MCF 10A (cell line): ENCODE measurements at regions of chr2 and their contacts with region 1.

Region 1: GRCh38 chr2:162221064-162221463 is 22.2 kb downstream of the FAP start:
- DNase-seq: peak; percentile 82
- H3K4me3 Mint-ChIP-seq: no peak overlapping the region
- H3K27ac Mint-ChIP-seq: no peak overlapping the region
- H3K4me1 Mint-ChIP-seq: peaks cover 9% of the 10 kb centered on the region
- H3K27me3 Mint-ChIP-seq: no peaks in the 10 kb centered on the region
- CTCF ChIP-seq: peak; percentile 97

Region 2: GRCh38 chr2:161412346-161412745 is 808.7 kb before region 1 on chr2:
- CTCF ChIA-PET with region 1: no interaction called
- POLR2A ChIA-PET with region 1: no interaction called
- intact Hi-C with region 1: no loop called
- DNase-seq: no peak
- H3K4me3 Mint-ChIP-seq: no peak overlapping the region
- H3K27ac Mint-ChIP-seq: no peak overlapping the region
- H3K4me1 Mint-ChIP-seq: peaks cover 14% of the 10 kb centered on the region
- H3K27me3 Mint-ChIP-seq: peaks cover 24% of the 10 kb centered on the region
- CTCF ChIP-seq: no peak

Region 3: DNA sequence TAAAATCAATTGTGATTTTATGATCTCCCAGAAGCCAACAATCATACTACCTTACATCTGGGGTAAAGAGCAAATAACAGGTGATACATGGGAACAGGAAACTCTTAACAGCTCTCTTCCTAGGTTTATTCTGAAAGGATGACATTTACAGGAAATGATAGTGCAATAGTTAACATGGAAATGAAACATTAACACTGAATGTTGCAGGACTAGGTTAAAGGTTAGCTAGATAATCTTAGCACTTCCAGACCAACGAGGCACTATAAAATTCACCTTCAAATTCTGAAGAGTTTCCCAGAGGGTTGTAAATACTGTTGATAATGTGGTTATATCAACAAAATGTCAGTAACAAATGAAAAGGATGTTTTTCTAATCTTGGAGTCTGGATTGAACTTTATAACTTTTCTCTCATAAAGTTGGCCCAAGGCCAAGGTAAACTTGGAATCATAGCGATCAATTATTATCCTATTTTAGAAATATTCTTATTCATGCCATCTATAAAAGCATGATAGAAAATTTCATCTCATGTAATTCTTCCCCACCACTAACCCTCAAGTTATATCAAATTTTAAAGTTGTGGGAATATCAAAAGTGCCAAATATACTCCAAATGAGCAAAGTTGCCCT is 36.1 kb before region 1 on chr2:
- CTCF ChIA-PET with region 1: interaction called, 10 read pairs
- POLR2A ChIA-PET with region 1: no interaction called
- intact Hi-C with region 1: no loop called
- DNase-seq: no peak
- H3K4me3 Mint-ChIP-seq: no peak overlapping the region
- H3K27ac Mint-ChIP-seq: no peak overlapping the region
- H3K4me1 Mint-ChIP-seq: no peaks in the 10 kb centered on the region
- H3K27me3 Mint-ChIP-seq: no peaks in the 10 kb centered on the region
- CTCF ChIP-seq: no peak

Region 4: GRCh38 chr2:162244541-162245031 is 23.5 kb after region 1 on chr2:
- CTCF ChIA-PET with region 1: interaction called, 56 read pairs
- POLR2A ChIA-PET with region 1: interaction called, 11 read pairs
- intact Hi-C with region 1: loop called (anchors 1 kb)
- DNase-seq: peak; percentile 93
- H3K4me3 Mint-ChIP-seq: peak overlapping the region; percentile 60
- H3K27ac Mint-ChIP-seq: peak overlapping the region; percentile 92
- H3K4me1 Mint-ChIP-seq: peaks cover 47% of the 10 kb centered on the region
- H3K27me3 Mint-ChIP-seq: no peaks in the 10 kb centered on the region
- CTCF ChIP-seq: no peak

Region 5: DNA sequence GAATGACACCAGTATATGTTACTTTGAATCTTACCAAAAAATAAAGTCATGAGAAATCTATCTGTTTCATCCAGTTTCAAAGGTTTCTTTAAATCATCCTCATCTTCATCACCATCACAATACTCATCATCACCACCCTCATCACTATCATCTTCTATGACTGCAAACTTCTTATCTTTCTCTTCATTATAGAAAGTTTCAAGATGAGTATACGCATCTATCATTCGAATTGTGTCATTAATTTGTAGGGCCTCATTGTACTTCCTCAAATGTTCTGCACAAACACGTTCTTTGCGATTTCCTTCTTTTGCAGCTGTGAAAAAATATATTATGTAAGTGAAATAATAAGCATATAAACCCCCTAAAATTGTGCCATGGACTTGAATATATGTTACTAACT is 56.3 kb after region 1 on chr2:
- CTCF ChIA-PET with region 1: interaction called, 16 read pairs
- POLR2A ChIA-PET with region 1: no interaction called
- intact Hi-C with region 1: no loop called
- DNase-seq: no peak
- H3K4me3 Mint-ChIP-seq: no peak overlapping the region
- H3K27ac Mint-ChIP-seq: no peak overlapping the region
- H3K4me1 Mint-ChIP-seq: no peaks in the 10 kb centered on the region
- H3K27me3 Mint-ChIP-seq: no peaks in the 10 kb centered on the region
- CTCF ChIP-seq: no peak

Region 6: GRCh38 chr2:162301151-162301804 is 80.2 kb after region 1 on chr2:
- CTCF ChIA-PET with region 1: interaction called, 639 read pairs
- POLR2A ChIA-PET with region 1: interaction called, 21 read pairs
- intact Hi-C with region 1: loop called (anchors 1 kb)
- DNase-seq: peak; percentile 76
- H3K4me3 Mint-ChIP-seq: no peak overlapping the region
- H3K27ac Mint-ChIP-seq: no peak overlapping the region
- H3K4me1 Mint-ChIP-seq: no peaks in the 10 kb centered on the region
- H3K27me3 Mint-ChIP-seq: no peaks in the 10 kb centered on the region
- CTCF ChIP-seq: peak; percentile 65

Region 7: GRCh38 chr2:162318328-162319180 is 97.5 kb after region 1 on chr2 and contains the start of gene IFIH1:
- CTCF ChIA-PET with region 1: interaction called, 22 read pairs
- POLR2A ChIA-PET with region 1: interaction called, 3 read pairs
- intact Hi-C with region 1: no loop called
- DNase-seq: peak; percentile 94
- H3K4me3 Mint-ChIP-seq: peak within 1 kb of the TSS; percentile 86
- H3K27ac Mint-ChIP-seq: peak within 1 kb of the TSS; percentile 99
- H3K4me1 Mint-ChIP-seq: peaks cover 19% of the 10 kb centered on the region
- H3K27me3 Mint-ChIP-seq: no peaks in the 10 kb centered on the region
- CTCF ChIP-seq: peak; percentile 18
- total RNA-seq, gene IFIH1: 4.5 and 7.2 TPM in 2 replicates

Region 8: DNA sequence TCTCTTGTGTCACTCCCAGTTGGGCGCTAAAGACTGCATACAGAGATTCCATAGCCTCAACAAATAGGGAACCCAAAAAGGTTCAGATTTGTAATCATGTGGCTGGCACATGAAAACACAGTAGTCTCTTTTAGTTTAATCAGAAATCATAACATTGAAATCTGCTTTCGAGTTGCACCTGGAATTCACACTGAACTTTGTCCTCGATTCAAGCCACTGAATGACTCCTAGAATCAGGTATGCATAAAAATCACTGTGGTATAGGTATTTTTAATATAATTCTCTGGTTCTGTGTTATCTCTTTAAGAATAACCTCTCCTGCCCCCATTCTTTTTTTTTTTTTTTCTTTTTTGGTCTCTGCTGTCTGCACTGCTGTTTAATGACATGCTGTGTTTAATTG is 467.3 kb after region 1 on chr2:
- CTCF ChIA-PET with region 1: no interaction called
- POLR2A ChIA-PET with region 1: no interaction called
- intact Hi-C with region 1: no loop called
- DNase-seq: no peak
- H3K4me3 Mint-ChIP-seq: no peak overlapping the region
- H3K27ac Mint-ChIP-seq: no peak overlapping the region
- H3K4me1 Mint-ChIP-seq: no peaks in the 10 kb centered on the region
- H3K27me3 Mint-ChIP-seq: peaks cover 65% of the 10 kb centered on the region
- CTCF ChIP-seq: no peak